CD14-positive monocyte (primary cell): ENCODE measurements at regions of chr12 and their contacts with region 1.

Region 1: GRCh38 chr12:98397316-98398105 is 117.9 kb upstream of the TMPO start:
- DNase-seq: peak; percentile 66 to 85 (median 73)
- H3K4me3 ChIP-seq: peak overlapping the region; percentile 25 to 64 (median 41)
- H3K4me3 Mint-ChIP-seq: peak overlapping the region; percentile 81 to 86
- H3K27ac ChIP-seq: no peak overlapping the region
- H3K27ac Mint-ChIP-seq: peak overlapping the region; percentile 13 to 81 (median 70)
- H3K4me1 ChIP-seq: peaks cover 29 to 42% of the 10 kb centered on the region in 2 donors
- H3K4me1 Mint-ChIP-seq: peaks cover 42% of the 10 kb centered on the region
- H3K27me3 ChIP-seq: no peaks in the 10 kb centered on the region
- H3K27me3 Mint-ChIP-seq: peaks cover 2 to 4% (median 3%) of the 10 kb centered on the region in 3 donors
- CTCF ChIP-seq: peak; percentile 88

Region 2: DNA sequence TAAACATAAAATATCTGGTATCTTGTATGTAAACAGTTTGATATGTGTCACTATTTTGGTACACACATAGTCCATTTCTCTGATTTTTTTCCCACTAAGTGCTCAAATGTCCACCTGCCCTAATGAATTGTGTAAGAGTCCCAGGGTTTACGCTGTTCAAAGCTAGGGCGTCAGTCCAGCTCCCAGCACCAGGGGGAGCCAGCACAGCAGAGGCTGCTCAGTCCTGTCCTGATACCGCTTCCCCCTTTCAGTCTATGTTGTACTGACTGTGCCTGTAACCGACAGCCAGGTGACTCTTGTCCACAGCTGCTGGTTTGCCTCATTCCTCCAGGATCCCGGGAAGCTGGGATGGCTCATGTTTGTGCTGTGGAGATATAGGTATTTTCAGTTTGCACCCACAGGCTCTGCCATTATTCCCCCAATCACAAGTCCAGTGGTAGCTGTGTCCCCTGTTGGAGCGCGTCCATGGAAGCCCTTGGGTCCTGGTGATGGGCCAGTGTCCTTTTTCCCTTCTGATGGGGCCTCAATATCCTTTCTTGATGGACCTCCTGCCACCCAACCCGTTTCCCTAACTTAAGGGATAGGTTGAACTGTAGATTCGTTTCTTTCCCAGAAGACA is 1248.5 kb before region 1 on chr12:
- intact Hi-C with region 1: loop called in 1 of 2 experiments (anchors 10 kb)
- DNase-seq: peak; percentile 15 to 25 (median 19)
- H3K4me3 ChIP-seq: no peak overlapping the region
- H3K4me3 Mint-ChIP-seq: no peak overlapping the region
- H3K27ac ChIP-seq: no peak overlapping the region
- H3K27ac Mint-ChIP-seq: no peak overlapping the region
- H3K4me1 ChIP-seq: no peaks in the 10 kb centered on the region
- H3K4me1 Mint-ChIP-seq: no peaks in the 10 kb centered on the region
- H3K27me3 ChIP-seq: no peaks in the 10 kb centered on the region
- H3K27me3 Mint-ChIP-seq: peaks cover 0 to 2% (median 1%) of the 10 kb centered on the region in 3 donors
- CTCF ChIP-seq: peak; percentile 72